MCF 10A (cell line): ENCODE measurements at regions of chr17 and their contacts with region 1.

Region 1: DNA sequence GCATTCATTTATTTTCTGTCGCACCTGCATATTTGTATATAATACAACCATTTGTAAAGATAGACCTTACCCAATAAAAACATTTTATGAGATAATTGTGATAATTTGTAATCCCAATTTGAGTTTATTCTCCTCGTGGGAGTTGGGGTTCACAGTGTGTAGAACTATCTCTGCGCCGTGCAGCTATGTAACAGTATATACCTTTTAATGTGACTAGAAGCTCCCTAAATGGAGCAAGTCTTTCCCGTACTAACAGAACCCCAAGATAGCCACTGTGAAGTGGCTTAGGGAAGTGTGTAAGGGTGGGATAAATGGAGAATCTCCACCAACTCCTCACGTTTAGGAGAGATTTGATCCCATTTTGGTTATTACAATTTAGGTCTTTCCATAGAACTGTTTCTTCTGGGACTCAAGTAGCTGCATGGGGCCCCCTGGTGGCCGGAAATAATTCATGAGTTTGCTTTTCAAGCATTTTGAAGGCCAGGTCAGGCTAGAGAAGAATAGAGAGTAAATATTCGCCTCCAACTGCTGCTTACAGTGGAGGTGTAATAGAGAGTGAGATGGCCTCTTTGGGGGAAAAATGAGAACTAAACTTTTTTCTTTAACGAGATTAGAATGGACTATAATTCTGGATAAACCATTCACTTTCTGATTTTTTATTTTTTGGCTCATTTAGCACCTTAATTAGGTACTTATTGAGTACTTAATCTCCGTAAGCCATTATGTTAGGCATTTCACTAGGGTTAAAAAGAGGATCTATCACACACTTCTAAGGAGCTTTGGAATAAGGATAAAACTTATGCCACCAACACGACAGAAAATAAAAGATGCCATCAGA is 4.5 kb downstream of the TMEM100 start:
- DNase-seq: peak; percentile 80
- H3K4me3 Mint-ChIP-seq: no peak overlapping the region
- H3K27ac Mint-ChIP-seq: no peak overlapping the region
- H3K4me1 Mint-ChIP-seq: peaks cover 10% of the 10 kb centered on the region
- H3K27me3 Mint-ChIP-seq: no peaks in the 10 kb centered on the region
- CTCF ChIP-seq: peak; percentile 62

Region 2: GRCh38 chr17:55533608-55534007 is 184.5 kb before region 1 on chr17:
- CTCF ChIA-PET with region 1: interaction called, 112 read pairs
- POLR2A ChIA-PET with region 1: no interaction called
- intact Hi-C with region 1: no loop called
- DNase-seq: no peak
- H3K4me3 Mint-ChIP-seq: no peak overlapping the region
- H3K27ac Mint-ChIP-seq: no peak overlapping the region
- H3K4me1 Mint-ChIP-seq: no peaks in the 10 kb centered on the region
- H3K27me3 Mint-ChIP-seq: no peaks in the 10 kb centered on the region
- CTCF ChIP-seq: no peak

Region 3: DNA sequence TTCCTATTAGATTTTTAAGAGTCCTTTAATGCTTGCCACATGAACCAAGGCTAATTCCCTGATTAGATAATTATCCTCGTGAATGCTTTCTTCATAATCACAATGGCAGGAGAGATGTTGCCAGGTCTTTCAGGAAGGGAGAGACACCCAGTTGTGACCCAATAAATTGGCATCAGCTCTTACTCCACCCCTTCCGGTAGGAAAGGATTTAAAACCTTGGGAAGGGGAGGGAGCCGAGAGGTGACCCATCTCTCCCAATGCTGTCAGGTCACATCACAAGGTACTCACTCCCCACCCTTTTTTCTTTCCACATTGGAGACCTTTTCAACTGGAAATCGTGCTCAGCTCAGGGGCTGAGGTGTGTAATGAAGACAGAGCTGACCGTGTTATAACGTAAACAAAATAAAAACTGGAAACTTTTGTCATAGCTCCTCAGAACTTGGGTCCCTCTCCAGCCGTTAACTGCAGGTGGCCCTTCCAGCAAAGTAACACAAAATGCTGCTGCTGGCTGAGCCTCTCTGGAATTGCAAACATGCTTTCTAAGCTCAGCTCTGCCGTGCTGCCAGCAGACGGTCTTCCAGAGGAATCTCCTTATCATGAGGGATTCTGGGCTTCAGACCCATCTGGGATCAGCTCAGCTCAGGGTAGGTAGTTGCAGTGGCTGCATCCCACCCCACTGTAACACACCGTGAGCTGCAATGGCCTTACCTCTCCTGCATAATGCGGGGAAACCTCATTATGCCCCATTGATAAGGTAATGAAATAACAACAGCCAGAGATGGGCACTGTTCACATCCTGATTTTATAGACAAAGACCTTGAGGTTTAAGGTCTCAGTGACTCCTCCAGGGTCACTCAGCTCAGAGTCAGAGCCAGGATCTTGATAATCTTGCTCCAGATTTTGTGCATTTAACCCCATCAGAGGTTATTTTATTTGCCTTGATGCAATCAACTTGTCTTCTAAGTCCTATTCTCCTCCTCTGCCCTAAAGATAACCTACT is 11.0 kb before region 1 on chr17:
- CTCF ChIA-PET with region 1: interaction called, 18 read pairs
- POLR2A ChIA-PET with region 1: interaction called, 8 read pairs
- intact Hi-C with region 1: no loop called
- DNase-seq: no peak
- H3K4me3 Mint-ChIP-seq: no peak overlapping the region
- H3K27ac Mint-ChIP-seq: no peak overlapping the region
- H3K4me1 Mint-ChIP-seq: peaks cover 14% of the 10 kb centered on the region
- H3K27me3 Mint-ChIP-seq: no peaks in the 10 kb centered on the region
- CTCF ChIP-seq: no peak

Region 4: GRCh38 chr17:55735731-55736405 is 17.8 kb after region 1 on chr17:
- CTCF ChIA-PET with region 1: interaction called, 46 read pairs
- POLR2A ChIA-PET with region 1: interaction called, 3 read pairs
- intact Hi-C with region 1: no loop called
- DNase-seq: peak; percentile 69
- H3K4me3 Mint-ChIP-seq: no peak overlapping the region
- H3K27ac Mint-ChIP-seq: no peak overlapping the region
- H3K4me1 Mint-ChIP-seq: peaks cover 41% of the 10 kb centered on the region
- H3K27me3 Mint-ChIP-seq: no peaks in the 10 kb centered on the region
- CTCF ChIP-seq: peak; percentile 50

Region 5: DNA sequence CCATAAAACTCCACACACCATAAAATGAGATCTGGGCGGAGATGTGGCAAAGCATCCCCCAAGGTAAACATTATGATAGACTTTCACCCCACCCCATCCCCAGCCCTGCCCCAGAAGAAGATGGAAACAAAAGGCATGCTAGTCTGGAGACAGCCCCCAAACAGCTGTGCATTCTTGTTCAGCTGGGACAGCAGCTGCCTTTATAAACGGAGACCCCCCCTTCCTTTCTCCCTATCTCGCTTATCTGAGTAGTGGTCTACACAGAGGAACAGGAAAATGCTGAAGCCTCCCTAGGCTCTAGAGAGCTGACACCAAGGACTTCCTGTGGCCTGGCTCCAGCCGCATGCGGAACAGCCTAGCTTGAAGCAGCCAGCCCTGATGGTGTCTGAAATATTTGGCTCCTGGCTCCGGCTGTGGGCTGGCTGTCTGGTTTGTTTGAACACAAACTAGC is 244.9 kb after region 1 on chr17:
- CTCF ChIA-PET with region 1: no interaction called
- POLR2A ChIA-PET with region 1: no interaction called
- intact Hi-C with region 1: no loop called
- DNase-seq: no peak
- H3K4me3 Mint-ChIP-seq: no peak overlapping the region
- H3K27ac Mint-ChIP-seq: no peak overlapping the region
- H3K4me1 Mint-ChIP-seq: no peaks in the 10 kb centered on the region
- H3K27me3 Mint-ChIP-seq: no peaks in the 10 kb centered on the region
- CTCF ChIP-seq: no peak